ENCODE measurements at regions of chr10 and their contacts with region 1.

Region 1: GRCh38 chr10:22704471-22704911 is 9.9 kb downstream of the PIP4K2A start:
- DNase-seq: no peak
- ATAC-seq: peak in 1 of 2 donors; percentile 33
- H3K4me3 Mint-ChIP-seq: peak overlapping the region in 9 of 10 donors; percentile 59 to 84 (median 68)
- H3K27ac Mint-ChIP-seq: peak overlapping the region; percentile 79 to 94 (median 89)
- H3K4me1 Mint-ChIP-seq: peaks cover 71 to 100% (median 97%) of the 10 kb centered on the region in 4 donors
- H3K27me3 Mint-ChIP-seq: no peaks in the 10 kb centered on the region

Region 2: GRCh38 chr10:22693371-22693784 is 11.1 kb before region 1 on chr10:
- POLR2A ChIA-PET with region 1: interaction called, 18 read pairs
- DNase-seq: no peak
- ATAC-seq: no peak
- H3K4me3 Mint-ChIP-seq: peak overlapping the region in 9 of 10 donors; percentile 23 to 61 (median 41)
- H3K27ac Mint-ChIP-seq: peak overlapping the region; percentile 61 to 97 (median 90)
- H3K4me1 Mint-ChIP-seq: peaks cover 35 to 97% (median 88%) of the 10 kb centered on the region in 4 donors
- H3K27me3 Mint-ChIP-seq: no peaks in the 10 kb centered on the region

Region 3: GRCh38 chr10:22723783-22724182 is 19.3 kb after region 1 on chr10:
- POLR2A ChIA-PET with region 1: no interaction called
- DNase-seq: no peak
- ATAC-seq: no peak
- H3K4me3 Mint-ChIP-seq: peak overlapping the region in 2 of 10 donors; percentile 9 to 14
- H3K27ac Mint-ChIP-seq: peak overlapping the region in 2 of 10 donors; percentile 79 to 81
- H3K4me1 Mint-ChIP-seq: peaks cover 11 to 38% (median 16%) of the 10 kb centered on the region in 4 donors
- H3K27me3 Mint-ChIP-seq: no peaks in the 10 kb centered on the region

Region 4: GRCh38 chr10:22765660-22766547 is 61.4 kb after region 1 on chr10:
- POLR2A ChIA-PET with region 1: no interaction called
- DNase-seq: no peak
- ATAC-seq: no peak
- H3K4me3 Mint-ChIP-seq: no peak overlapping the region
- H3K27ac Mint-ChIP-seq: no peak overlapping the region
- H3K4me1 Mint-ChIP-seq: peaks cover 0 to 19% (median 1%) of the 10 kb centered on the region in 4 donors
- H3K27me3 Mint-ChIP-seq: no peaks in the 10 kb centered on the region